Activated CD4-positive, alpha-beta T cell treated with anti-CD3 and anti-CD28 coated beads for 36 hours (primary cell): ENCODE measurements at regions of chr15 and their contacts with region 1.

Region 1: DNA sequence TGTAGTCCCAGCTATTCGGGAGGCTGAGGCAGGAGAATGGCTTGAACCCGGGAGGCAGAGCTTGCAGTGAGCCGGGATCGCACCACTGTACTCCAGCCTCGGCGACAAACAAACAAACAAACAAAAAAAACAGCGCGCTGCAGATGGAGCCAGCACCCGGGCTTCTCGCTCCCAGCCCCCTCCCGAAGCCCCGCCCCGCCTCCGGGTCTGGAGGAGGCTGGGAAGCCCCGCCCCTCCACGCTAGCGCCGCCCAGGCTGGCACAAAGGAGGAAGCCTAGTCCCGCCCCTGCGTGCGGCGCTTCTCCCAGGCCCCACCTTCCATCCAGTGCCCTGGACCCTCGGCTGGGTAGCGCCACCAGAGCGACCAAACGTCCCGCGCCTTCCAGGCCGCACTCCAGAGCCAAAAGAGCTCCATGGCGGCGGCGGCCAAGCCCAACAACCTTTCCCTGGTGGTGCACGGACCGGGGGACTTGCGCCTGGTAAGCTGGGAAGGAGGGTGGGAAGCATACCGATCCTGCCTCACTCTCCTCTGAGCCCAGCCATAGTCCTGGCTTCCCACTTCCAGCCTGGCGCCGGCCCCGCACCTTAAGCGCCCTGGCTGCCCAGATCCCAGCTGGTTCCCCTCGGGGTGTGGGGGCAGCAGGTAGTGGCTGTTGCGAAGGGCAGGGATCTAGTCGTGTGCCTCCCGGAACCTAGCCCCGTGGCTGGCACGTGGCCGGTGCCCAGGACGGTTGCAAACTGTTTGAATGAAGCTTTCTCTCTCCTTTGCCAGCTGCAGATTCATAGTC is at the start of gene SORD:
- DNase-seq: peak; percentile 96
- ATAC-seq: peak; percentile 99
- H3K4me3 Mint-ChIP-seq: peak within 1 kb of the TSS; percentile 83
- H3K27ac Mint-ChIP-seq: peak within 1 kb of the TSS; percentile 74
- H3K4me1 Mint-ChIP-seq: peaks cover 23% of the 10 kb centered on the region
- H3K27me3 Mint-ChIP-seq: peaks cover 16% of the 10 kb centered on the region
- total RNA-seq, gene SORD: 17.1 to 17.7 TPM

Region 2: GRCh38 chr15:44861439-44861910 is 161.6 kb before region 1 on chr15:
- CTCF ChIA-PET with region 1: no interaction called
- POLR2A ChIA-PET with region 1: no interaction called
- intact Hi-C with region 1: loop called (anchors 1 to 5 kb)
- DNase-seq: no peak
- ATAC-seq: no peak
- H3K4me3 Mint-ChIP-seq: no peak overlapping the region
- H3K27ac Mint-ChIP-seq: no peak overlapping the region
- H3K4me1 Mint-ChIP-seq: no peaks in the 10 kb centered on the region
- H3K27me3 Mint-ChIP-seq: peaks cover 3% of the 10 kb centered on the region

Region 3: GRCh38 chr15:45634442-45635190 is 611.6 kb after region 1 on chr15 and contains the start of gene SQOR:
- CTCF ChIA-PET with region 1: no interaction called
- POLR2A ChIA-PET with region 1: no interaction called
- intact Hi-C with region 1: loop called in 1 of 2 experiments (anchors 10 kb)
- DNase-seq: peak; percentile 86
- ATAC-seq: peak; percentile 66
- H3K4me3 Mint-ChIP-seq: peak within 1 kb of the TSS; percentile 96
- H3K27ac Mint-ChIP-seq: peak within 1 kb of the TSS; percentile 90
- H3K4me1 Mint-ChIP-seq: peaks cover 32% of the 10 kb centered on the region
- H3K27me3 Mint-ChIP-seq: no peaks in the 10 kb centered on the region
- total RNA-seq, gene SQOR: 105 to 108 TPM